ENCODE measurements at regions of chr7 and their contacts with region 1.

Region 1: DNA sequence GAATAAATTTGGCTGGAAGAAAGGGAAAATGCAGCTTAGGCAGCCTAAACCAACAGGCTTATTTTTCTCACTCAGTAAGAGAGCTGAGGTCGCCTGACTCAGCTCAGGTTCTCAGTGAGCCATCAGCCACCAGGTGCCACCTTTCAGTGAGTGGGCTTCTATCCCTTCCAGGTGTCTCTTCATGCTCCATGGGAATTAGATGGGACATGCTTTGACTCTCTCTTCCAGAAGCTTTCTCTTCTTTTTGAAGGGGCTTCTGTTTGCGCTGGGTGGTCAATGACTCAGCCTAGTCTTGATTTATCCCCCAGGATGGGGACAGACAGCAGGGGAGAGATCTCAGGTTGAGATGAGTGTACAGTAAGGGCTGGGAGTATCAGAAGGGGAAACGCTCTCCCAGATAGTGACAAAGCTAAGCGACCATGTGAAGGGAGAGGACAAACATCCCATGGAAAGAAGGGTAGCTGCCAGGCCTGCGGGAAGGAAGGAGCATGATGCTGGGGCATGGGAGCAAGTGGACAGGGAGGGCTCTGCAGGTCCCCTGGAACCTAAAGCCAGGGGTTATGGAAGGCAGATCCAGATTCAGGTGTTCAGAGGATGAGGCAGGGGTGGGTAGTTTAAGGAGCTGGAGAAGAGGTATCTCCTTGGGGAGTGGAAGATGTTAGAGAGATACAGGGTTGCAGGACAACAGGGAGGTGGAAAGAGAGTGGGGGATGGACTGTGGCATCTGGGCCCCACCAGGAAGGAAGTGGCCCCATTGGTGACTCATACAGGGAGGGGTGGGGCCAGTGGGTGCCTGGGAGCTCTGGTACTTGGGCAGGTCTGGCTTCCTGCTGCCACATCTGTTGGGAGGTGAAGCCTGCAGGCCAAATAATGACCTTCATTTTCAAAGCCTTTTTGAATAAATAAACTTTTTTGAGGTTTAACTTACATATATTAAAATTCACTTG is 32.5 kb downstream of the OGDH start:
- DNase-seq: peak; percentile 72
- ATAC-seq: peak; percentile 87
- H3K4me3 ChIP-seq: peak overlapping the region in 1 of 5 experiments; percentile 31
- H3K4me3 Mint-ChIP-seq: peak overlapping the region; percentile 84
- H3K27ac ChIP-seq: peak overlapping the region; percentile 83 to 93
- H3K27ac Mint-ChIP-seq: peak overlapping the region; percentile 99
- H3K4me1 ChIP-seq: peaks cover 44 to 69% of the 10 kb centered on the region in 2 donors
- H3K4me1 Mint-ChIP-seq: peaks cover 59% of the 10 kb centered on the region
- H3K27me3 ChIP-seq: no peaks in the 10 kb centered on the region
- H3K27me3 Mint-ChIP-seq: no peaks in the 10 kb centered on the region
- CTCF ChIP-seq: no peak

Region 2: DNA sequence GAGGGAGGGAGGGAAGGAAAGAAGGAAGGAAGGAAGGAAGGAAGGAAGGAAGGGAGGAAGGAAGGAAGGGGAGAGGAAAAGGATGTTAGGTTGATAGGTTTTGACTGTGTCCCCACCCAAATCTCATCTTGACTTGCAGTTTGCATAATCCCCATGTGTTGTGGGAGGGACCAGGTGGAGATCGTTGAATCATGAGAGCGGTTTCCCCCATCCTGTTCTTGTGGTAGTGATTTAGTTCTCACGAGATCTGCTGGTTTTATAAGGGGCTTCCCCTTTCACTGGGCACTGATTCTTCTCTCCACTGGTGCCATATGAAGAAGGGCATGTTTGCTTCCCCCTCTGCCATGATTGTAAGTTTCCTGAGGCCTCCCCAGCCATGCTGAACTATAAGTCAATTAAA is 133.3 kb before region 1 on chr7:
- CTCF ChIA-PET with region 1: no interaction called
- POLR2A ChIA-PET with region 1: no interaction called
- intact Hi-C with region 1: no loop called
- DNase-seq: peak; percentile 42
- ATAC-seq: no peak
- H3K4me3 ChIP-seq: no peak overlapping the region
- H3K4me3 Mint-ChIP-seq: no peak overlapping the region
- H3K27ac ChIP-seq: peak overlapping the region in 1 of 2 donors; percentile 59
- H3K27ac Mint-ChIP-seq: no peak overlapping the region
- H3K4me1 ChIP-seq: peaks cover 0 to 3% of the 10 kb centered on the region in 2 donors
- H3K4me1 Mint-ChIP-seq: peaks cover 5% of the 10 kb centered on the region
- H3K27me3 ChIP-seq: peaks cover 0 to 5% (median 0%) of the 10 kb centered on the region in 4 experiments
- H3K27me3 Mint-ChIP-seq: no peaks in the 10 kb centered on the region
- CTCF ChIP-seq: no peak

Region 3: GRCh38 chr7:44581879-44582603 is 56.8 kb before region 1 on chr7 and contains the start of gene TMED4:
- CTCF ChIA-PET with region 1: interaction called, 3 read pairs
- POLR2A ChIA-PET with region 1: interaction called, 9 read pairs
- intact Hi-C with region 1: loop called (anchors 1 kb)
- DNase-seq: peak; percentile 100
- ATAC-seq: peak; percentile 92
- H3K4me3 ChIP-seq: peak within 1 kb of the TSS; percentile 72 to 99 (median 88)
- H3K4me3 Mint-ChIP-seq: peak within 1 kb of the TSS; percentile 96
- H3K27ac ChIP-seq: peak within 1 kb of the TSS; percentile 92 to 97
- H3K27ac Mint-ChIP-seq: peak within 1 kb of the TSS; percentile 99
- H3K4me1 ChIP-seq: peaks cover 21% of the 10 kb centered on the region in 2 donors
- H3K4me1 Mint-ChIP-seq: peaks cover 28% of the 10 kb centered on the region
- H3K27me3 ChIP-seq: no peaks in the 10 kb centered on the region
- H3K27me3 Mint-ChIP-seq: no peaks in the 10 kb centered on the region
- CTCF ChIP-seq: no peak
- total RNA-seq, gene TMED4: 84.0 and 84.1 TPM in 2 replicates

Region 4: GRCh38 chr7:45122975-45123860 is 484.3 kb after region 1 on chr7:
- CTCF ChIA-PET with region 1: no interaction called
- POLR2A ChIA-PET with region 1: no interaction called
- intact Hi-C with region 1: no loop called
- DNase-seq: no peak
- ATAC-seq: no peak
- H3K4me3 ChIP-seq: no peak overlapping the region
- H3K4me3 Mint-ChIP-seq: no peak overlapping the region
- H3K27ac ChIP-seq: no peak overlapping the region
- H3K27ac Mint-ChIP-seq: no peak overlapping the region
- H3K4me1 ChIP-seq: peaks cover 0 to 20% of the 10 kb centered on the region in 2 donors
- H3K4me1 Mint-ChIP-seq: peaks cover 7% of the 10 kb centered on the region
- H3K27me3 ChIP-seq: no peaks in the 10 kb centered on the region
- H3K27me3 Mint-ChIP-seq: no peaks in the 10 kb centered on the region
- CTCF ChIP-seq: no peak